MCF 10A (cell line): ENCODE measurements at regions of chr12 and their contacts with region 1.

Region 1: DNA sequence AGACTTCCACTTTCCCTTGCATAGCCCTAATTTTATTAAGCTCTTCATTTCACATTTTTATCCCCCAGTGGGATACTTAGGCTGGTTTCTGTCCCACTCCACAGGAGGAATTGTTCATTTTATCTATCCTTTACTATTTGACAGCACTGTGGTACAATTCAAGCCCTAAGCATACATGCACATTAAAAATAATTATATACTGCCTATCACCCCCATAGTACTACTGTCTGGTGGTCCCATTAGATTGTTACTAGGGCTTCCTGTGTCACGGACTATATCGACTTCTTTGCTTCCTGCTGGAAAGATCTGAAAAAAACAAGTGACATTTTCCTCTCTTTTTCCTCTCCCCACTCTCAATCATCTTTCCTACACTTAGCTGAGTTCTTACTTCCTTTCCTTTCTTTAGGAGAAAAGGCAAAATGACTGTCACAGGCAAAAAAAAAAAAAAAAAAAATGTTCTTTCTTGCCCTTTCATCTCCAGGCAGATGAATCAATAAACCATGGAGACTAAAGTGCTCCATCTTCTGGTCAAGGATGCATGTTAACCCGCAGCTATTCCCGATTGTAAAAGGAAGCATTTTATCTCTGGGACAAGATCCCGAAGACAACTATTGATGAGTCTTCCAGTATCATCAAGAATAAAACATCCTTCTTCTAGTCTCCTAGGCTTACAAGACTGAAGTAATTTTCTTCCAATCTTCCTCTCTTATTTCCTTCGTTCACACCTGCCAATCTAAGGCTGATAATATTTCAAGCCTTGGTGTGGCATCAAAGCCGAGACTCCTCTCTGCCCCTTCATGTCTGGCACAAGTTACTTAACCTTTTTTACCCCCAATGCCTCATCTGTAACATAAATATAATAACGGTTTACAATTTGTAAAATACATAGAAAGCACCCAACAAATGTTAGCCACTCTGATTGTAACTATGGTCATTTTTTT is 94.4 kb upstream of the PLEKHG7 start:
- DNase-seq: peak; percentile 70
- H3K4me3 Mint-ChIP-seq: no peak overlapping the region
- H3K27ac Mint-ChIP-seq: no peak overlapping the region
- H3K4me1 Mint-ChIP-seq: peaks cover 11% of the 10 kb centered on the region
- H3K27me3 Mint-ChIP-seq: no peaks in the 10 kb centered on the region
- CTCF ChIP-seq: peak; percentile 47

Region 2: GRCh38 chr12:92445253-92446082 is 163.0 kb before region 1 on chr12:
- CTCF ChIA-PET with region 1: interaction called, 12 read pairs
- POLR2A ChIA-PET with region 1: no interaction called
- intact Hi-C with region 1: no loop called
- DNase-seq: no peak
- H3K4me3 Mint-ChIP-seq: no peak overlapping the region
- H3K27ac Mint-ChIP-seq: no peak overlapping the region
- H3K4me1 Mint-ChIP-seq: peaks cover 15% of the 10 kb centered on the region
- H3K27me3 Mint-ChIP-seq: no peaks in the 10 kb centered on the region
- CTCF ChIP-seq: no peak